Left cardiac atrium (tissue), 4 donors: ENCODE measurements at regions of chr6 and their contacts with region 1.

Region 1: GRCh38 chr6:138817822-138818308 is 22.0 kb downstream of the ECT2L start:
- DNase-seq: no peak
- ATAC-seq: peak in 1 of 2 donors; percentile 17

Region 2: GRCh38 chr6:138987640-138988468 is 170.0 kb after region 1 on chr6 and contains the start of gene REPS1:
- intact Hi-C with region 1: loop called (anchors 2 to 5 kb)
- DNase-seq: peak; percentile 94
- ATAC-seq: peak; percentile 98 to 99
- total RNA-seq, gene REPS1: 29.0 to 36.3 TPM

Region 3: DNA sequence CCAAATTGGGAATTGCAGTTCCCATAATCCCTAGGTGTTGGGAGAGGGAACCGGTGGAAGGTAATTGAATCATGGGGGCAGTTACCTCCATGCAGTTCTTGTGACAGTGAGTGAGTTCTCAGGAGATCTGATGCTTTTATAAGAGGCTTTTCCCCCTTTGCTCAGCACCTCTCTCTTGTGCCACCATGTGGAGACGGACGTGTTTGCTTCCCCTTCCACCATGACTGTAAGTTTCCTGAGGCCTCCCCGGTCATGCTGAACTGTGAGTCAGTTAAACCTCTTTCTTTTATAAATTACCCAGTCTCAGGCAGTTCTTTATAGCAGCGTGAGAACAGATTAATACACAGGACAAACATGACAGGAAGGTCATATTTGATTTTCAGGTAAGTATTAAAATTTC is 291.7 kb after region 1 on chr6:
- intact Hi-C with region 1: loop called in 1 of 2 experiments (anchors 5 kb)
- DNase-seq: no peak
- ATAC-seq: no peak